Activated T-helper 1 cell treated with anti-CD3 and anti-CD28 coated beads, Interleukin-12 subunit alpha, Interleukin-12 subunit beta, Interleukin-2, Interleukin-4 antibody, amounts not matched to agents 30 ng/mL and 10 ng/mL and 1 ng/mL, durations not matched to agents 14 hours and 24 hours and 36 hours (primary cell): ENCODE measurements at regions of chr3 and their contacts with region 1.

Region 1: DNA sequence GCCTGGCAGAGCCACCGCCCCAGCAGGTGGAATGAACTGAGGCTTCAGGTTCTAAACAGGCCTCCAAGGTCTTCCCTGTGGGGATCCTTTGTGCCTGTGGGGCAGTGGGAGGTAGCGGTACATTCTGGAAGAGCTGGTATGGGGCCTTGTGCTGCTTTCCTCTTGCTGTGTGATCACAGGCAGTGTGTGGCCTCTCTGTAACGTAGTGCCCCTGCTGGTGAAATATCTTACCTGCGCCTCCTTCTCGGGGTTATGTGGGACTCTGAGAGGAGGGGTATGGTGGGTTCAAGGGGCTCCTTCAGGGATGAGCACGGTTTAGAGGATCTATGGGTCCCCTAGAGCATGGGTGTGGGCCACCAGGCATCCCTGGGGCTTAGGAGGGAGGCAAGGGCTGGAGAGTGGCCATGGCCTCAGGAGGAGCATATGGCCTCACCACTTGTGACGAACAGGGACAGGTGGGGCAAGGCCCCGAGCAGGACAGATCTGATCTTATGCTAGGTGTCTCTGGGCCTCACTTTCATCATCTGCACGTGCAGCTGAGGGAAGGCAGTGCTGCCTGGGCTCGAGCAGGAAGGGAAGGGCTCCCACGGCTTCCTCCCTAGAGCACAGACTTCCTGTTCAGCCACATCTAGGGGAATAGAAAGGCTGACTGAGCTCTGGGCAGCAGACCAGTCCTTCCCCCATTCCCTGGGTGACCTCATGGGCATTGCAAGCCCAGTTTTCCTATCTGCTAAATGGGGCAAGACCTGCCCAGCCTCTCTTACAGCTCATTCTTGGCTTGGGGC is 1.9 kb upstream of the ALS2CL start:
- DNase-seq: peak; percentile 16
- H3K4me3 Mint-ChIP-seq: peak overlapping the region; percentile 22
- H3K27ac Mint-ChIP-seq: peak overlapping the region; percentile 58
- H3K4me1 Mint-ChIP-seq: peaks cover 33% of the 10 kb centered on the region
- H3K27me3 Mint-ChIP-seq: peaks cover 24% of the 10 kb centered on the region

Region 2: DNA sequence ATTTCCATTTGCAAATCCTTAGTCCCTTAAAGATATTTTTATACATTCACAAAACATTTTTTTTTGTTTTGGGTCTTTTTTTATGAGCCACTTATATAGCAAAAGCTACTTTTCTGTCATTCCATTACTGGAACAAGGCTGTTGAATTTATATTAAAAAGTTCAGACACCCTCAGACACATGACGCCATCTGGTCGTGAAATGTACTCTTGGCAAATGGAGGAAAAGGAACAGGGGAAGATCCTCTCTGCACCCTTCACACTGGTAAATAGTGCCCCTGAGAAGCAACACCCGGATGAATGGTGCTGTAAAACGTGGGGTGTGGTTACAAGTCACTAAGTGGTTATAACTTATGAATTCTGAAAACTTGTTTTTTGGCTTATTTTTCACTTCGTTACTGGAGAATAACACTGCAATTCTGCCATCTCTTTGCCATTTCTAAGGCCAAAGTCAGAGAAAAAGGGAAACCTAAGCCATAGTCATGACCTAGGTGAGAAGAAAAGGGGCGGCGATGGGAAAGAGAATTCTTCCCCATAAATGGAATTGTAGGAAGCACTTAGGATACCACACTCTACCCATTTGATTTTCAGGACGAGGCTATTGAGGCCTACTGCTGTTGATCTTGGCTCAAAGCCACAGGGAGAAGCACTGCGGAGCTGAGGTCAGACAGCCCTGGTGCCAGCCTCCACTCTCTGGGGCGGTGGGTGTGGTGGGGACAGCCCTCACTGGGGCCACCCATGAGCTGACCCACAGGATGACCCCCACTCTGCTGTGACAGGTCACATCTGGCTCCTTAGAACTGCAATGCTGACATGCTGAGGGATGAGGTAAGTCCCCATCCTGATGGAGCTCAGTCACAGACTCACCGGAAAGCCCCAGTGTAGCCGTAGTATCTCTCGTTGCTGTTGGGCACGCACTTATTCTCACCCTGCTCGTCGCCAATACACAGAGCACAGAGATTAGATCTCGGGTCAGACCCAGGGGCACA is 252.5 kb before region 1 on chr3:
- intact Hi-C with region 1: no loop called
- DNase-seq: peak; percentile 31
- H3K4me3 Mint-ChIP-seq: no peak overlapping the region
- H3K27ac Mint-ChIP-seq: no peak overlapping the region
- H3K4me1 Mint-ChIP-seq: peaks cover 25% of the 10 kb centered on the region
- H3K27me3 Mint-ChIP-seq: peaks cover 4% of the 10 kb centered on the region

Region 3: GRCh38 chr3:46629551-46630517 is 65.5 kb before region 1 on chr3:
- intact Hi-C with region 1: loop called (anchors 2 kb)
- DNase-seq: peak; percentile 68
- H3K4me3 Mint-ChIP-seq: peak overlapping the region; percentile 58
- H3K27ac Mint-ChIP-seq: peak overlapping the region; percentile 40
- H3K4me1 Mint-ChIP-seq: peaks cover 21% of the 10 kb centered on the region
- H3K27me3 Mint-ChIP-seq: peaks cover 7% of the 10 kb centered on the region

Region 4: GRCh38 chr3:46812237-46812791 is 116.9 kb after region 1 on chr3:
- intact Hi-C with region 1: loop called (anchors 5 kb)
- DNase-seq: peak; percentile 54
- H3K4me3 Mint-ChIP-seq: peak overlapping the region; percentile 50
- H3K27ac Mint-ChIP-seq: no peak overlapping the region
- H3K4me1 Mint-ChIP-seq: peaks cover 23% of the 10 kb centered on the region
- H3K27me3 Mint-ChIP-seq: peaks cover 11% of the 10 kb centered on the region